ENCODE measurements at regions of chr12 and their contacts with region 1.

Region 1: DNA sequence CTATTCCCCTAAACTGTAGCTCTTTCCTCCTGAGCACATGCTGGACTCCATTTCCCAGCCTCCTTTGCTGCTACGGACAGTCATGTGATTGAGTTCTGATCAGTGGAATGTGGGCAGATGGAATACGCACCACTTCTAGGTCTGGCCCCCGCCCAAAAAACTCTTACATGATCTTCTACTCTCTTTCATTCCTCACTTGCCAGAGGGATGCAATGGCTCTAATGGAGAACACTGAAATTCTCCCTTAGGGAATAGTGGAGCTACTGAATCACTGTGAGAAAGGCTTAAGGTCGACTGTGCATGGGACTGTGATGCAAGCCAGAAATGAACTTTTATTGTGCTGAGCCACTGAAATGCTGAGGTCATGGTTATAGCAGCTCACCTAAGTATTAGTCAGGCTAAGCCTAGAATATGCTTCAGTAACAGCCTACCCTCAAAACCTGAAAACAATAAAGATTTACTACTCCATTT is 13.0 kb upstream of the TMED2 start:
- DNase-seq: no peak
- H3K4me3 ChIP-seq: no peak overlapping the region
- H3K4me3 Mint-ChIP-seq: no peak overlapping the region
- H3K27ac ChIP-seq: no peak overlapping the region
- H3K27ac Mint-ChIP-seq: no peak overlapping the region
- H3K4me1 ChIP-seq: no peaks in the 10 kb centered on the region
- H3K4me1 Mint-ChIP-seq: peaks cover 3% of the 10 kb centered on the region
- H3K27me3 ChIP-seq: no peaks in the 10 kb centered on the region
- H3K27me3 Mint-ChIP-seq: peaks cover 15 to 19% (median 16%) of the 10 kb centered on the region in 3 donors
- CTCF ChIP-seq: no peak

Region 2: DNA sequence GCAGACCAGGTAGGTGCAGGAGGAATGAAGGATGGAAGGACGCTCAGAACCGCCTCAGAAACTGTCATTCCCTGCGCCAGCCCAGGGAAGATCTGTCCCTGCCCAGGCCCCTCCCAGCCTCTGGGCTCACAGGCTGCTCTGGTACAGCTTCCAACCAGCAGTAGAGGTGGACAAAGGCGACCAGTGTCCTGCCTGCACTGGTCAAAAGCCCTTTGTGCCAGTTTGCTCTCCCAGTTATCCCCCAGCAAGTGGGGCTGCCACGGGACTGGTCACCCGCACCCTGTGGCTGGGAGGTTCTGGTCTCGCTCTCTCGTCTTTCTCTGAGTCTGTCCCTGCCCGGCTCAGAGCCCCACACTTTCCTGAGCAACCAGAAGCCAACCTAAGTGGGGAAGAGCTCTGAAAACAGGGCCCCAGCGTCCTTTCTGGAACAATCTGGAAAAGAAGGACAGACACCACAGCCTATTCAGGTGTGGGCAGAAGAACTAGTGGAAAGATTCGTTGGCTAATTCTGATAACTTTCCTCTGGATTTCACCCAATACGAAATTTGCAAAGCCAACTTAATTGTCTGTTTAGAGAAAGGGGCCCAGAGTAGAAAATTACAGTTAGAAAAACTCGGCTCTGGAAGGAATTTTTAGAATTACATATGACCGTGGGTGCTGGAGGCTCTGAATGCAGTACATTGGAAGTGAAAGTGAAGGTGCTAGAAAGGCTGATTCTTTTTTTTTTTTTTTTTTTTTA is 91.8 kb before region 1 on chr12:
- intact Hi-C with region 1: loop called in 1 of 2 experiments (anchors 5 kb)
- DNase-seq: no peak
- H3K4me3 ChIP-seq: no peak overlapping the region
- H3K4me3 Mint-ChIP-seq: no peak overlapping the region
- H3K27ac ChIP-seq: no peak overlapping the region
- H3K27ac Mint-ChIP-seq: peak overlapping the region in 1 of 7 donors; percentile 35
- H3K4me1 ChIP-seq: no peaks in the 10 kb centered on the region
- H3K4me1 Mint-ChIP-seq: peaks cover 7% of the 10 kb centered on the region
- H3K27me3 ChIP-seq: no peaks in the 10 kb centered on the region
- H3K27me3 Mint-ChIP-seq: peaks cover 7 to 14% (median 12%) of the 10 kb centered on the region in 3 donors
- CTCF ChIP-seq: no peak